ENCODE measurements at regions of chr11 and their contacts with region 1.

Region 1: DNA sequence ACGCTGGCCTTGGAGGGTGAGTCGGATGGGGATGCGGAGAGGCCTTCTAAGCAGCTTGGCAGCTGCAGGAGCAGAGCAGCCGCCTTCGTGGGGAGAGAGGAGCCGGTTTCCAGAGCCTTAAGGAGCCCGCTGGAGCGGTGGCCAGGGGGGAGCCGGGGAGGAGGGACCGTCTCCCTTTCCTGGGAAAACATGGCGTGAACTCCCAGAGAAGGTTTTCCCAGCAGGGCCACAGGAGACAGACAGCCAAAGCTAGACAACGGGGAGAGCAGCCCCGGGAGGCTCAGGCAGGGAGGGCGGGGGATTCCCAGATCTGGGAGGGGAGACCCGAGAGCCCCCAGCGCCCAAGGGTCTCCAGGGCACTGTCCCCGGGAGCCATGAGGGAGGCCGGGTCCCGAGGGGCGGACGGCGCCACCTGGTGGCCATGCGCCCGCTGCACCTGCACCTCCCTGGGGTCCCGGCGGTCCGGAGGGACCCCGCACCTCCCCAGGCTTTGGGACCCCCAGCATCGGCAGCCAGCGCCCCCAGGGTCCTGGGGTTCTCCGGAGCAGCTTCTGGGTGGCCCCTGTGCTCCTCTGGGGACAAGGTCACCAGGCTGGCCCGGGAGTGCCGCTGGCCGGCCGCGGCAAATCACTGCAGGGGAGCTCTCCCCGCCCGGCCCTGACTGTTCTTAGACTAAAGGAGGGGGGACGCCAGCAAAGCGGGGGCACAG is 2.4 kb upstream of the SYT8 start:
- H3K4me3 Mint-ChIP-seq: peak overlapping the region; percentile 30
- H3K27ac Mint-ChIP-seq: no peak overlapping the region
- H3K4me1 Mint-ChIP-seq: peaks cover 24% of the 10 kb centered on the region
- H3K27me3 Mint-ChIP-seq: peaks cover 81% of the 10 kb centered on the region

Region 2: DNA sequence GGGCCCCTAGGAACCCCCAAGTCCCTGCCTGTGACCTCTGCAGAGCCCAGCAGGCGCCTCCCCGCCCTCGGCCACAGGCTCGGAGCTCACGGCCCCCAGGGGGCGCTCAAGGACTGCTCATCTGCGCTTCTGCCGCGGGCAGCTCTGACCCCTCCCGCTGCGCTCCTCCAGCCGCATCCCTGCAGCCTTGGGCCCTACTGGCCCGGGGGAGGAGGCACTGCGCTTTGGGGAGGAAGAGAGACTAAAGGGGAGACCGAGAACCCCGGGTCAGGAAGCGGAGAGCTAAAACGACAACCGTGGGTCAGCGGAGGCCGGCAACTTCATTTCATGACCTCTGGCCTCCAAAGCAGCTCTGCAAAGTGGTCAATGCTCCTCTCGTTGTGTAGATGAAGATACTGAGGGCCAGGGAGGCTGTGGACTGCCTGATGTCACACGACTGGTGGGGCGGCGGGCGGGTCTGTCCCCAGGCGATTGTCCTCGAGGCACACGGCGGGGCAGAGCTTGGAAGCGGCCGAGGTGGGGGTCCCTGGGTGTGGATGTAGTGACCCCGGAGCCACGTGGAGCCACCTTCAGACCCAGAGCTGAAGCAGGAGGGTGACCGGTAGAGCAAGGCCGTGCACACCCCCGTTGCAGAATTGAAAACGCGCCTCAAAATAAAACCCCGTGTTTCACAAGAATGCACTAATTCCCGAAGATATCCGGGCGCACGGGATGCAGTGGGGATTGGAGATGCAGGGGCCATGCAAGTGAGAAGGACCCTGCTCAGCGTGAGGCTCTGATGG is 138.1 kb before region 1 on chr11:
- intact Hi-C with region 1: loop called (anchors 1 kb)
- H3K4me3 Mint-ChIP-seq: no peak overlapping the region
- H3K27ac Mint-ChIP-seq: no peak overlapping the region
- H3K4me1 Mint-ChIP-seq: peaks cover 11% of the 10 kb centered on the region
- H3K27me3 Mint-ChIP-seq: peaks cover 83% of the 10 kb centered on the region

Region 3: GRCh38 chr11:1706634-1707400 is 125.5 kb before region 1 on chr11:
- intact Hi-C with region 1: loop called (anchors 1 kb)
- H3K4me3 Mint-ChIP-seq: no peak overlapping the region
- H3K27ac Mint-ChIP-seq: no peak overlapping the region
- H3K4me1 Mint-ChIP-seq: no peaks in the 10 kb centered on the region
- H3K27me3 Mint-ChIP-seq: peaks cover 64% of the 10 kb centered on the region